Heart right ventricle (tissue), 16 donors: ENCODE measurements at regions of chr20 and their contacts with region 1.

Region 1: DNA sequence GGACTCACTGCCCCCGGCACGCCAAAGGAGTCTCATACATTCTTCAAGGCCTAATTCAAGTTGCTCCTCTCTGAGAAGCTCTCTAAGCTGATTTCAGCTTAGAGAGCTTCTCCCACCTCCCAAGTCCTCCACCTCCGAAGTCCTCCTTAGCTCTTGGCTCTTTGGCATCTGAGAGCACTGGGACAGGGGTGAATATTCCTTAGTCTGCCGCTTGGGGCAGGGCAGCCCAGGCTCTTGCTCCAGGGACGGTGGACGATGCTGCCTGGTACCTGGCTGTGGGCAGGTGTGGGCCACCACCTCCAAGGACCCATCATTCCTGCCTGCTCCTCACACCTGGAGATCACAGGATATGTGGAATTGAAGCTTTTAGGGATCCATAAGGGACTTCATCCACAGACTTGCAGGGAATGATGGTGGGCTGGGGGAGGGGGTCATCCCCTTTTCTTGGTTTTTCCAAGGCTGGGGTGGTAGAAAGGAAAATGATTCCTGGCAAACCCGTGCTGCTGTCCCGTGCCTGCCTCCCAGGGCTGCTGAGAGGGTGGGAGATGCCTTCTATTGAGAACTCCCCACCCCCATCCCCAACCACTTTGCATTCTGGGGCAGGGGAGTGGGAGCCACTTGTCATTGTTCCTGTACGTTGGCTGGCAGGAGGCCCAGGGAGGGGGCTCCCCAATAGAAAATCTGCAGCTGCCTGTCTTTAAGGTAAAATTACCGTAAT is 57.4 kb downstream of the ARHGAP40 start:
- DNase-seq: no peak
- ATAC-seq: peak in 5 of 8 donors; percentile 43 to 70 (median 56)
- H3K4me3 ChIP-seq: no peak overlapping the region
- H3K27ac ChIP-seq: no peak overlapping the region
- H3K4me1 ChIP-seq: no peaks in the 10 kb centered on the region
- H3K27me3 ChIP-seq: peaks cover 0 to 63% (median 49%) of the 10 kb centered on the region in 7 donors
- CTCF ChIP-seq: peak in 8 of 9 donors; percentile 27 to 62 (median 56)

Region 2: GRCh38 chr20:38635721-38636288 is 23.2 kb before region 1 on chr20:
- intact Hi-C with region 1: no loop called
- DNase-seq: no peak
- ATAC-seq: no peak
- H3K4me3 ChIP-seq: no peak overlapping the region
- H3K27ac ChIP-seq: no peak overlapping the region
- H3K4me1 ChIP-seq: peaks cover 0 to 6% (median 0%) of the 10 kb centered on the region in 9 donors
- H3K27me3 ChIP-seq: peaks cover 0 to 34% (median 12%) of the 10 kb centered on the region in 7 donors
- CTCF ChIP-seq: no peak

Region 3: DNA sequence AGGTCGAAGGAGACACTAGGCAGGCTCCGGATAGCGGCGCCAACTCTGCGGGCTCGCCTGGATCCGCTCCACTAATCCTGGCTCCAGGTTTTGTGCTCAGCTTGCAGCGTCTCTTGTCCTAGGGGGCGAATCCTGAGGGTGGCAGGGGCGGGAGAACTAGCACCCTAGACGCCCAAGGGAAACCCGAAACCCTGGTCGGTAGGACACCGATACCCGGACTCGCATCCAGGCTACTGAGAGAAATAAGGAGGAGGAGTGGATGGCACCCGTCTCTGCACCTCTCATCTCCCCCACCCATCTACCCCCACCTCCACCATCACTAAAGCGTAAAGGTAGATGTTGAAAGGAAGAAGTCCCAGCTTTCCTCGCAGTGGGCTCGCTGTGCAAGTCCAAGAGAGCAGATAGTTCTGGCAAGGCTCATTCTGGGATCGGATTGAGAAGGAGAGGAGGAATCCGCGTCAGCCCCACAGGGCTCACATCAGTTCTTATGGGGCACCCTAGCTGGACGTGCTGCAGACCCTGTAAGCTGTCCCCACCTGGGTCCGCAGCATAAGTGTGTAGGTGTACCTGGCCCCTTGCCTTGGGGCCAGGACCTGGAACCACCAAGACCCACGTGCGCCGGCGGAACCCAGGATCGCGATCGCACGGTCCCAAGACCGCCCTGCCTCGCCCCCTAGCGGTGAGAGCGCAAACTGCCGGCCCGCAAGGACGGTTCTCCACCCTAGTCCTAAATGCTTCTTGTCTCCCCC is 72.1 kb after region 1 on chr20:
- intact Hi-C with region 1: loop called in 2 of 10 experiments (anchors 5 kb)
- DNase-seq: peak; percentile 49 to 73
- ATAC-seq: peak; percentile 75 to 93 (median 81)
- H3K4me3 ChIP-seq: peak overlapping the region in 8 of 10 donors; percentile 13 to 46 (median 27)
- H3K27ac ChIP-seq: no peak overlapping the region
- H3K4me1 ChIP-seq: peaks cover 0 to 53% (median 40%) of the 10 kb centered on the region in 9 donors
- H3K27me3 ChIP-seq: peaks cover 45 to 100% (median 100%) of the 10 kb centered on the region in 7 donors
- CTCF ChIP-seq: peak; percentile 84 to 99 (median 97)

Region 4: GRCh38 chr20:38985603-38986170 is 326.6 kb after region 1 on chr20:
- intact Hi-C with region 1: no loop called
- DNase-seq: no peak
- ATAC-seq: peak; percentile 28 to 92 (median 73)
- H3K4me3 ChIP-seq: no peak overlapping the region
- H3K27ac ChIP-seq: peak overlapping the region; percentile 11 to 72 (median 52)
- H3K4me1 ChIP-seq: peaks cover 5 to 34% (median 26%) of the 10 kb centered on the region in 9 donors
- H3K27me3 ChIP-seq: no peaks in the 10 kb centered on the region
- CTCF ChIP-seq: no peak